Dorsolateral prefrontal cortex (tissue), 120 donors: ENCODE measurements at regions of chr1 and their contacts with region 1.

Region 1: DNA sequence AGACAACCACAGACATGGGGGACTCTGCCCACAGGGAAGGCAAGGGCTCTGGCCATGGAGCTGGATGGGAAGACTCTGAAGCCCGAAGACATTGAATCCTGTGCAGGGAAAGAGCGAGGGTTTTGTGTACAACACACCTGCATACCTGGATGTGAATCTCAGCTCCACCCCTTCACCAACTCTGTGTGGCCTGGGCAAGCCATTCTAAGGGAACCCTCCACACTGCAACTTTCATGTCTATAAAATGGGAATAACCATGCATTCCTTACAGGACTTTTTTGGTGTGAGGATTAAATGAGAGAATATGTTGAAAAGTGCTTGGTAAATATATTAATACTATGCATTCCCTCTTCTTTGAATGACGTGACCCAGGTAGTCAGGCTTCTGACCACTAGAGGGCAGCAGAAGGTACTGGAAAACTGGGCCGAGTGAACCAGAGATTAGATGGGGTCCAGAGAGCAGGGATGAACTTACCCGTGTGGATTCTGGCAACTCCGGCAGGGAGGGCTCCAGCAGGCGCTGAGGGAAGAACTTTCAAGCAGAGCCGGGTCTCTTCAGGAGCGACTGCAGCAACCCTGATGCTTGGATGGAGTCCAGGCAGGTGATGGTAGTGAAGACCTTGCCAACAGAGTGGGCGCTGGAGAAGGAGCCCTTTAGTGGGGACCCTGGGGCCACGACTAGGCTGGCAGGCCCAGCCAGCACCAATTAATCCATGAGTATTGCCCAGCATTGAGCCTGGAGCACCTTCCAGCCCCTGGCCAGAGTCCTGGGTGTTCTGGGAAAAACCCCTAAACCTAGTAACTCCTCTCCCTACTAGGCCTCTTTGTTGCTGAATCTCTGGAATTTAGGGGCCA is 834 bp upstream of the ELF3 start:
- DNase-seq: peak; percentile 57 to 90 (median 78)
- H3K4me3 ChIP-seq: no peak overlapping the region
- H3K27ac ChIP-seq: peak overlapping the region in 4 of 59 donors; percentile 1 to 64 (median 33)
- H3K27me3 ChIP-seq: no peaks in the 10 kb centered on the region
- CTCF ChIP-seq: peak; percentile 73 to 97 (median 89)

Region 2: GRCh38 chr1:202085682-202086404 is 76.3 kb after region 1 on chr1:
- intact Hi-C with region 1: loop called in 1 of 2 experiments (anchors 2 kb)
- DNase-seq: peak in 9 of 10 donors; percentile 43 to 78 (median 67)
- H3K4me3 ChIP-seq: peak overlapping the region in 6 of 59 donors; percentile 2 to 35 (median 22)
- H3K27ac ChIP-seq: peak overlapping the region; percentile 79 to 99 (median 95)
- H3K27me3 ChIP-seq: no peaks in the 10 kb centered on the region
- CTCF ChIP-seq: peak in 1 of 56 donors; percentile 0